ENCODE measurements at regions of chr11 and their contacts with region 1.

Region 1: DNA sequence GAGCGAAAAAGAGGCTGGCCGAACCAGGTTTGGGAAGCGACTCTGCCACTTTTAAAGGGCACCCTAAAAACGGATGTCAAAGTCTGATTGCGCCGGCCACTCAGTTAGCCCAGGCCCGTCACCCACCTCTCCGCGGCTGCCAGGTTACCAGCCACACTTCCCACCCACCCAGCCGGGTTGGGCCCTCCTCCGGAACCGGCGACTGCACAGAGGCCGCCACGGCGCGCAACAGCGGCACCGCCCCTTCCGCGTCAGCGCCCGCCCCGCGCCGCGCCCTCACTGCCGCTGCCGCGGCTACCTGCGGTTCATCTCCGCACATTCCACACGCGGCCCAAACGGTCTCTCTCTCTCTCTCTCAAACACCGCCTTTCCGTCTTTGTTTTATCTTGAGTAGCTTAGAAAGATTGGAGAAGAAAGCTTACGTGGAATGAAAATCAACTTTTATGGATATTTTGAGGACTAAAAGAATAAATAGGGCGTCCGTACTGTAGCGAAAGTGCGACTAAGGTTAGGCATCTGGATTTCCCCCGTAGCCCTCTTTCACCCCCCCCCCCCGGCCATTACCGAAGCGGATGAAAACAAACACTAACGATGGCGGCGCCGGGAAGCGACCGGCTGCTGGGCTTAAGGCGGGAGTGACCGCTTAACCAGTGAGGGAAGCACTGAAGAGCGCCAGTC is at the starts of genes ATG13 and HARBI1:
- DNase-seq: peak; percentile 91
- ATAC-seq: peak; percentile 94
- H3K4me3 Mint-ChIP-seq: peak within 1 kb of the TSS; percentile 93
- H3K27ac Mint-ChIP-seq: peak within 1 kb of the TSS; percentile 100
- H3K4me1 Mint-ChIP-seq: peaks cover 30% of the 10 kb centered on the region
- H3K27me3 Mint-ChIP-seq: no peaks in the 10 kb centered on the region
- CTCF ChIP-seq: no peak
- total RNA-seq, gene ATG13: 49.1 and 73.7 TPM in 2 replicates
- total RNA-seq, gene HARBI1: 5.4 and 6.5 TPM in 2 replicates

Region 2: DNA sequence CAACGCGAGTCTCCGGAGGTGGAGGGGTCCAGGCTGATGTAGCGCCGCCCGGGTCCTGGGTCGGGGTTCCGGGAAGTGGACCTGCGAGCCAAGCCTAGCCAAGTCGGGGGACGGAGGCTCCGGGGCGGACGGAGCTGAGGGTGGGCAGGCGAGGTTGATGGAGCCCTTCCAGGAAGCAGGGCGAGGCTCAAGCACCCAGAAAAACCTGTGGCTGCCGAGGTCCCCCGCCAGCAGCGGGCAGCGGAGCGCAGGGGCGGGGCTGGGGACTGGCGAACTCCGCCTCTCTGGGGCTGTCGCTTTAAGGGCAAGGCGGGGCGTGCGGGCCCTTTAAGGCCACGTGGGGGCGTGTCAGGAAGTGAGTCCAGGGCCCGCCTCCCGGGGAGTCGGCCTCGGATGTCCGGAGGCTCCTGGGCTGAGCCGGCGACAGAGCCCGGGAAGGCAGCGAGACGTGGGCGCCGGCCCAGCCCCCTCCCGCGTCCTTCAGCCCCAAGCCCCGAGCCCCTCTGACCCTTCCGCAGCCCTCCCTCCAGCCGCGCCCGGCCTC is 812.3 kb before region 1 on chr11 and contains the start of gene SLC35C1:
- CTCF ChIA-PET with region 1: no interaction called
- POLR2A ChIA-PET with region 1: no interaction called
- intact Hi-C with region 1: loop called (anchors 10 kb)
- DNase-seq: peak; percentile 95
- ATAC-seq: peak; percentile 96
- H3K4me3 Mint-ChIP-seq: peak within 1 kb of the TSS; percentile 92
- H3K27ac Mint-ChIP-seq: peak within 1 kb of the TSS; percentile 78
- H3K4me1 Mint-ChIP-seq: peaks cover 41% of the 10 kb centered on the region
- H3K27me3 Mint-ChIP-seq: no peaks in the 10 kb centered on the region
- CTCF ChIP-seq: no peak
- total RNA-seq, gene SLC35C1: 8.6 and 8.8 TPM in 2 replicates

Region 3: DNA sequence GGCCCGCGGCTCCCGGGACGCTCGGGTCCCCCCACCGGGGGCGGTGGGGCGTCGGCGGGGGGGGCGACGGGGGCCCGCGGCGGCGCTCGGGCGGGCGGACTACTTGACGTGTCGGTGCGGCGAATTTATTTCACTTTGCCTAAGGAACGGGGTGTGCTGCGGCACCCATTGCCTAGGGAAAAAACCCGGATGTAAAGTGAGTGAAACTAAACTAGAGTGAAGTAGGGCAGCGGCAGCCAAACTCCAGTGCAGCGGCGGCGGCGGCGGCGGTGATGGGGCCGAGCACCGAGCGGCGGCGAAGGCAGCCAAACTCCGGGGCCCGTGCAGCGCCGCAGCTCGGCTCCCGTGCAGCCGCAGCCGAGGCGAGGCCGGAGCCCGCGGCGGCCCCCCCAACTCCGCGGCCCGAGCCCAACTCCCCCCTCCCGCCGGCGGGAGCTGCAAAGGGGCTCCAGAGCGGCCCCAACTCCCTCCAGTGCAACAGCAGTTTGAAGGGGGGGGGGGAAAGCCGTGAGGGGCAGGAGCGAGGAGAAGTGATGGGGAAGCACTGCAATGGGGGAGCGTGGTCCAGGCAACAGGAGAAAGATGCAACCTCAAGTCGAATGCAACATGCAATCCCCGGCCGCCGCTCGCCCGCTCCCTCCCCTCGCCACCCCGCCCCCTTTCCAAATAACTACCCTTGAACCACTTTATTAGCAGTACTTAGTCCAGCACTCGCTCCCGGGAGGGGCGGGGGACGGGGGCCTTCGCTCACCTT is 495.2 kb before region 1 on chr11:
- CTCF ChIA-PET with region 1: no interaction called
- POLR2A ChIA-PET with region 1: no interaction called
- intact Hi-C with region 1: loop called (anchors 2 kb)
- DNase-seq: no peak
- ATAC-seq: peak; percentile 47
- H3K4me3 Mint-ChIP-seq: peak overlapping the region; percentile 87
- H3K27ac Mint-ChIP-seq: peak overlapping the region; percentile 91
- H3K4me1 Mint-ChIP-seq: peaks cover 30% of the 10 kb centered on the region
- H3K27me3 Mint-ChIP-seq: no peaks in the 10 kb centered on the region
- CTCF ChIP-seq: no peak

Region 4: DNA sequence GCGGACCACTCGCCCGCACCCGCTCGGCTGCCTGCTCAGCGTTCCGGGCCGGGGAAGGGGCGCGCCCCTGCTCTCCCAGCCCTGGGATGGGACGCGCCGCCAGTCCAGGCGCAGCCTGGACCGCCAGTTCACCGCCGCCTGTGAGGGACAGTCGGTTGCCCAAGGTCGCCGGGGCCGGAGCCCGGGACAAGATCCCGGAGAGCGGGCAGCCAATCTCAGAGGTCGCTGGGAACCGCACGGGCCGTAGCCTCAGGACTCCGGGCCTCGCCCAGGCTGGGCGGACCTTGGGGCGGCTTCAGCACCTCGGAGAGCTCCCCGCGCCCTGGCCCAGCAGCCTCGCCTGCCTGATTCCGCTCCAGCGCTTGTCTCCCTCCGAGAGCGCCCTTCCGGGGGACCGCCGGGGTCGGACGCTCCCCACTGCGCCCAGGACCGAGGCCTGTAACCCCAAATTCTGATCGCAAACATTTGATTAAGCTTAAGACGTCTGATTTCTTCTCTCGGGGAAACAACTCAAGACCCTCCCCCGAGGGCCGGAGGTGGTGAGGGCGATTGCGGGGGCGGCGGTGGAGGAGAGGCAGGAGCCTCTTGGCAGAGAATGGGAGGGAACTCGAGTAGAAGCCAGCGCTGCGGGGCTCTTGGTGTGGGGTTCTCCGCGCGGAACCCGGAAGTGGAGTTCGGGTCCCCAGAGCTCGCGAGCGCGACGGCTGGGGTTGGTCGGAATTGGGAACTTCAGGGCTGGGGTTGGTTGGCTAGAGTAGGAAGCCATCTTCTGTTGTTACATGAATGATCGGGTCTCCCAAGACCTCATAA is 224.5 kb before region 1 on chr11:
- CTCF ChIA-PET with region 1: no interaction called
- POLR2A ChIA-PET with region 1: no interaction called
- intact Hi-C with region 1: loop called (anchors 1 kb)
- DNase-seq: peak; percentile 74
- ATAC-seq: peak; percentile 90
- H3K4me3 Mint-ChIP-seq: peak overlapping the region; percentile 70
- H3K27ac Mint-ChIP-seq: peak overlapping the region; percentile 35
- H3K4me1 Mint-ChIP-seq: peaks cover 24% of the 10 kb centered on the region
- H3K27me3 Mint-ChIP-seq: peaks cover 25% of the 10 kb centered on the region
- CTCF ChIP-seq: no peak

Region 5: GRCh38 chr11:46554205-46555055 is 62.7 kb before region 1 on chr11:
- CTCF ChIA-PET with region 1: no interaction called
- POLR2A ChIA-PET with region 1: no interaction called
- intact Hi-C with region 1: loop called (anchors 2 kb)
- DNase-seq: no peak
- ATAC-seq: no peak
- H3K4me3 Mint-ChIP-seq: no peak overlapping the region
- H3K27ac Mint-ChIP-seq: peak overlapping the region; percentile 27
- H3K4me1 Mint-ChIP-seq: peaks cover 34% of the 10 kb centered on the region
- H3K27me3 Mint-ChIP-seq: no peaks in the 10 kb centered on the region
- CTCF ChIP-seq: no peak

Region 6: DNA sequence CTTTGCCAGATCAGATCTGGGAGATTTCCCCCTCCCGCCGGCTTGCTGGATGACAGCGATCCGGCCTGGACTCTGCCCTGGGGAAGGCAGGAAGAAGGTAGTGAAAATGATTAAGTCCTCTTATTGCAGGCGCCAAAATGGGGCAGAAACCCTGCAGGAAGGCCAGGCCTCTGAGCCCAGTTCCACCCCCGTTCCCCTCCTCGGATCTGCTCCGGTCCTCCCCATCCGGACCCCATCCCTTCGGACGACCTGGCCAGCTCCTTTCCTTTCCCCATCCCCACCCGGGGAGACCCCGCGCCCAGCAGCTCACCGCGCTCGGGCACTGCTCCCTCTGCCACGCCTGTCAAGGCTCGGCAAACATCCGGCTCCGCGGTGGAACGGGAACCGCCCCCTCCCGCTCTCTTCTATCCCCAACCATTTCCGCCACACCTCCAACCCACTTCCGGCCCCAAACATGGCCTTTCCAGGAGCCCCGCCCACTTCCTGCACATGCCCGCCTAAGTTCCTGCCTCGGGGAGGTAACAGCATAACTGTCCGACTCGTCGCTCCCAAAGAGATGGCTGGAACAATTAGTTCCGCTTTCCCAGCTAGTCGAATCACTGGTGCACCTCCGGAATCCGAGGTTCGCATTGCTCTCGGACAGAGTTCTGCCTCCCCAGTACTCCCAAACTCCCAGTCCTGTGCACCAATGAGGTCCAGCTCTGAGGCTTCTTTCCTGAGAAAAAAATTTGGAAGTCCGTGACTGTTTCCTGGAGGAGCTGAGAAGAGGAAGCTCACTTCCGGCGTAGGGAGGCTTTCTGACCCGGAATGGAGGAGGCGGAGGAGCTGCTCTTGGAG is 83.3 kb after region 1 on chr11 and contains the starts of genes ARHGAP1 and ZNF408:
- CTCF ChIA-PET with region 1: interaction called, 3 read pairs
- POLR2A ChIA-PET with region 1: interaction called, 6 read pairs
- intact Hi-C with region 1: loop called (anchors 1 kb)
- DNase-seq: peak; percentile 96
- ATAC-seq: peak; percentile 87
- H3K4me3 Mint-ChIP-seq: peak within 1 kb of the TSS; percentile 99
- H3K27ac Mint-ChIP-seq: peak within 1 kb of the TSS; percentile 95
- H3K4me1 Mint-ChIP-seq: peaks cover 51% of the 10 kb centered on the region
- H3K27me3 Mint-ChIP-seq: no peaks in the 10 kb centered on the region
- CTCF ChIP-seq: no peak
- total RNA-seq, gene ARHGAP1: 47.6 and 58.0 TPM in 2 replicates
- total RNA-seq, gene ZNF408: 15.6 and 16.1 TPM in 2 replicates

Region 7: DNA sequence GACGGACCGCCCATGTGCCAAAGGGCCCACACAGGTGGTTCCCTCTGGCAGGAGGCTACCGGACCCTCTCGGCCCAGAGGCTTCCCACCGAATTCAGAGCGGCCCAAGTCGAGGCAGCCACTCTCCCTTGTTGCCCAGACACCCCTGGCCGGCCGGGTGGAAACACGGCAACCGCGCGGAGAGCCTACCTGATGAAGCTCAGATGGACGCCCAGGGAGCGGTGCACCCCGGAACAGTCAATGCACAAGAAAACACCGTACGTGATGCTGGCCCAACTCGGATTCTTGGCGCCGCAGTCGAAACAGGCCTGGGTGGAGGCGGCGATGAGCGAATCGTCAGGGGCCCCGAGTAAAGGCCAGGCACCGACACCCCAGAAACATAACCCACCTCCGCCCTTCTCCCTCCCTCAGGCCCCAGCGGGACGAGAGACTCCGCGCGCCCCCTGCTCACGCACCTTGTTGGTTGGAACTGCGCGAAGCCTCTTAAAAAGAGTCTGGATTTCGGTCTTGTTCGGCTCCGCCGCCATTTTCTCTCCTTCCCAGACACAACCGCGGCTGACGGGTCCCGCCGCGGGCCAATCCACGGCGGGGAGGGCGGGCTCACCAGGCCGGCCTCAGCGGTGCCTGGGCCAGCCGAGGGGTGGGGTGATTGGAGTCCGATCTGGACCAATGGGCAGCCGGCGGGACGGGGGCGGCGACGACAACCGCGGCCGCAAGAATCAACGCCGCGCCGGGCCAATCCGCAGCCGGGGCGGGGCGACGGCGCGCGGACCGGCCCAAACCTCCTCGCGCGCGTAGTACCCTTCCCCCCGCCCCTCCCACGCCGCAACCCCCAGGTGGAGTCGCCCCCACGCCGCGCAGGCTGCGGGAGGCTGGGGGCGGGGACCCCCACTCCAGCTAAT is 559.4 kb after region 1 on chr11 and contains the start of gene ARFGAP2:
- CTCF ChIA-PET with region 1: no interaction called
- POLR2A ChIA-PET with region 1: no interaction called
- intact Hi-C with region 1: loop called (anchors 1 kb)
- DNase-seq: peak; percentile 92
- ATAC-seq: peak; percentile 93
- H3K4me3 Mint-ChIP-seq: peak within 1 kb of the TSS; percentile 98
- H3K27ac Mint-ChIP-seq: peak within 1 kb of the TSS; percentile 99
- H3K4me1 Mint-ChIP-seq: peaks cover 35% of the 10 kb centered on the region
- H3K27me3 Mint-ChIP-seq: no peaks in the 10 kb centered on the region
- CTCF ChIP-seq: no peak
- total RNA-seq, gene ARFGAP2: 145 and 176 TPM in 2 replicates